Common myeloid progenitor, CD34-positive (primary cell): ENCODE measurements at regions of chr6 and their contacts with region 1.

Region 1: DNA sequence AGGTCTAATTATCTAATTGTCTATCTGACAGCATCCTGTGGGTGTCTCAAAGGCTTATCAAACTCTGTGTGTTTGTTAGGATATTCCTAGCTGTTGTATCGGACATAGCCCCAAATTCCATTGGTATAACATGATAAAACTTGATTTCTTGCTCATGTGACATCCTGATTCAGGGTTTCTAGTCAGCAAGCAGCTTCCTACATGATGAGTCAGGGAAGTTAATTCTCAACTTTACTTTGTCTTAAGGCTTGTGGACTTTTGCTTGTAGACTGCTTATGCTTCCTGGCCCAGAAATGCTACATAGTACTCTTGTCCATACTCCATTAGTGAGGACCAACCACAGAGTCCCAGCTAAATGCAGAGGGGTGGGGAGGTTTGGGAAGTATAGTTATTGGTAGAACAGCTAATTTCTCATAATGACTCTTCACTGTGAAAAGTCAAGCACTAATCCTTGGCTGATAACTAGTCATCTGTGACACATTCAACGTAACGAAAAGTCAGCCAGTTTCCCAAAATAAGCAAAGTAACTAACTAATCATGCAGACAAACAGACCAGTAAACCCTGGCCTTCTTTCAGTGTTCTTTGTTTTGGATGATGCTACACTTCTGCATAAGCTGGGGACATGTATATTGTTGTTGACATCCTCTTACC is 25.8 kb downstream of the NKAIN2 start:
- DNase-seq: peak in 2 of 3 donors; percentile 67 to 83
- H3K4me3 ChIP-seq: peak overlapping the region in 4 of 7 experiments; percentile 23 to 68 (median 56)
- H3K27ac ChIP-seq: peak overlapping the region; percentile 14 to 76
- H3K4me1 ChIP-seq: peaks cover 12 to 42% (median 29%) of the 10 kb centered on the region in 4 experiments
- H3K27me3 ChIP-seq: no peaks in the 10 kb centered on the region

Region 2: GRCh38 chr6:123415844-123416468 is 413.5 kb before region 1 on chr6:
- CTCF ChIA-PET with region 1: no interaction called
- POLR2A ChIA-PET with region 1: no interaction called
- DNase-seq: peak; percentile 51 to 82 (median 75)
- H3K4me3 ChIP-seq: no peak overlapping the region
- H3K27ac ChIP-seq: no peak overlapping the region
- H3K4me1 ChIP-seq: no peaks in the 10 kb centered on the region
- H3K27me3 ChIP-seq: peaks cover 0 to 2% (median 0%) of the 10 kb centered on the region in 5 experiments

Region 3: DNA sequence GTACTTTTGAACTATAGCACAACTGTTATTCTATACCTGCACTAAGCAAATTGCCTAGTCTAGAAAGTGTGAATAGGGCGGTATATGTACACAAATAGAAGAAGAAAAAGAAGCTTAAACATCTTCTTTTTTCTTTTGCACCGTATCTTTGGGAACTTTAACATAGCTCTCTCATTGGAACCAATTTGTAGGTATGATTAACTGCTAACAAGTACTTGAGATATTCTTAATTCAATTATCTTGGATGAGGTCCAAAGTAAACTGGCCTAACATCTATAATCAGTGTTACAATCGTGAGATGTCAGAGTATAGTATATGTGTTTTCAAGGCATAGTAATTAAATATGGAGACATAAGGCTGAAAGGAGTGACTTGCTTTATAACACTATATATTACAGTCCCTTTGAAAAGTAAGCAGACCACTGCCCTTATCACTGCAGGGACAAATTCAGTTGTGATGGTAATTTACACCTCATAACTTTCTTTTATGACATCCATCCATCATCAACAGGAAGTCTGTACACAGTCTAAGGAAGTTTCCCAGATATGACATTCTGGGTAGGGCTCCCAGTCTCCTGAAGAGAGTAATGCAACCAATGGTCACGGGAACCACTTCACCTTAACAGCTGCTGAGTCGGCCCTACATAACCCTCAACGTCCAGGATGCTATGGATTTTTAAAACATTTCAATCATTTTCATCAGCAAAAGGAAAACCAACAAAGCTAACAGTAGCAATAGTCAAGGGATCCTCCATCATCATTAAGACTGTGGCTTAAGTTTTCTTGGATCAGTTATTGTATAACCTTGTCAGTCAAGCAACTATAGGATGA is 11.9 kb after region 1 on chr6:
- CTCF ChIA-PET with region 1: interaction called, 12 read pairs
- POLR2A ChIA-PET with region 1: no interaction called
- DNase-seq: peak; percentile 44 to 81 (median 63)
- H3K4me3 ChIP-seq: peak overlapping the region in 5 of 7 experiments; percentile 10 to 77 (median 23)
- H3K27ac ChIP-seq: peak overlapping the region; percentile 59 to 85
- H3K4me1 ChIP-seq: peaks cover 11 to 69% (median 35%) of the 10 kb centered on the region in 4 experiments
- H3K27me3 ChIP-seq: no peaks in the 10 kb centered on the region